Activated CD4-positive, alpha-beta T cell treated with anti-CD3 and anti-CD28 coated beads for 36 hours (primary cell): ENCODE measurements at regions of chr2 and their contacts with region 1.

Region 1: DNA sequence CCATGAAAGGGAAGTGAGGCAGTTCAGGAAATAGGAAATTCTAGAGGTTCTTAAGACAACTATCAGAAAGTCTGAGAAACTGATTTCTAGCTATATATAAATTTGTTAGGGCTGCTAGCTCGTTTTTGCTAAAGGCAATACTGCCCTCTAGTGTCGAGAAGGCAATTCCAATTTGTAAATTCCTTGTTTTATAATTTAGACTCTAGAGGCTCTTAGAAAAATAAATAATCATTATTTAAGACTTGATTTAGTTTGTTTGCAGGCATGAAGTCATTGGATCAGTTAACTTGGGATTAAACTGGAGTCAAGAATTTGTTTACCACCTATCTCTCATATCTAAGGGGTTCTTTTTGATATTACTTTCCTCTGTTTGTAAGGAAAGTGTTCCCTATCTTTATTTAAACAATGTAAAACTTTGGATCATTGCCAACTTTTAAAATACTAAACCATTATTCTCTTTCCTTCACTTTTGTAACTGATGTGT is 66.2 kb downstream of the ACVR2A start:
- DNase-seq: peak; percentile 29
- ATAC-seq: no peak
- H3K4me3 Mint-ChIP-seq: no peak overlapping the region
- H3K27ac Mint-ChIP-seq: no peak overlapping the region
- H3K4me1 Mint-ChIP-seq: no peaks in the 10 kb centered on the region
- H3K27me3 Mint-ChIP-seq: no peaks in the 10 kb centered on the region

Region 2: GRCh38 chr2:146734042-146734820 is 1176.8 kb before region 1 on chr2:
- CTCF ChIA-PET with region 1: interaction called, 4 read pairs
- POLR2A ChIA-PET with region 1: no interaction called
- intact Hi-C with region 1: loop called (anchors 5 to 10 kb)
- DNase-seq: no peak
- ATAC-seq: no peak
- H3K4me3 Mint-ChIP-seq: no peak overlapping the region
- H3K27ac Mint-ChIP-seq: no peak overlapping the region
- H3K4me1 Mint-ChIP-seq: no peaks in the 10 kb centered on the region
- H3K27me3 Mint-ChIP-seq: peaks cover 1% of the 10 kb centered on the region

Region 3: GRCh38 chr2:147045113-147045512 is 865.9 kb before region 1 on chr2:
- CTCF ChIA-PET with region 1: interaction called, 41 read pairs
- POLR2A ChIA-PET with region 1: no interaction called
- intact Hi-C with region 1: loop called (anchors 1 kb)
- DNase-seq: peak; percentile 68
- ATAC-seq: peak; percentile 65
- H3K4me3 Mint-ChIP-seq: no peak overlapping the region
- H3K27ac Mint-ChIP-seq: no peak overlapping the region
- H3K4me1 Mint-ChIP-seq: peaks cover 6% of the 10 kb centered on the region
- H3K27me3 Mint-ChIP-seq: no peaks in the 10 kb centered on the region

Region 4: GRCh38 chr2:147082850-147083522 is 828.0 kb before region 1 on chr2:
- CTCF ChIA-PET with region 1: interaction called, 60 read pairs
- POLR2A ChIA-PET with region 1: no interaction called
- intact Hi-C with region 1: loop called (anchors 1 kb)
- DNase-seq: peak; percentile 59
- ATAC-seq: peak; percentile 75
- H3K4me3 Mint-ChIP-seq: no peak overlapping the region
- H3K27ac Mint-ChIP-seq: no peak overlapping the region
- H3K4me1 Mint-ChIP-seq: peaks cover 2% of the 10 kb centered on the region
- H3K27me3 Mint-ChIP-seq: peaks cover 1% of the 10 kb centered on the region

Region 5: DNA sequence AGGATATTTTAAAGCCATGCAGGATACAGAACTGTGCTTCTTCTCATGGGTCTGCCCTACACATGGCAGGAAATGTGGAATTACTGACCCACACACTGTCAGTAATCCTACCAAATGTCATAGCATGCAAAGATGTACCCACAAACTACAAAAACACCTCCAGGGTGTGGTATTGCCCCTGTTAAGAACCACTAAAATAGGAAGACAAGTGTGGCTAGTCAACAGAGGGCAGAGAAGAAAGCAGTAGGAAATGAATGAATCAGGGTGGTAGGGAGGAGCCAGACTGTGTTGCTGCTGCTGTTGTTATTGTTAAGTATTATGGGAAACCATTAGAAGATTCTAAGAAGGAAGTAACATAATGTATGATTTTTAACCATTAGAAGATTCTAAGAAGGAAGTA is 622.9 kb before region 1 on chr2:
- CTCF ChIA-PET with region 1: no interaction called
- POLR2A ChIA-PET with region 1: no interaction called
- intact Hi-C with region 1: loop called (anchors 2 to 5 kb)
- DNase-seq: peak; percentile 20
- ATAC-seq: peak; percentile 96
- H3K4me3 Mint-ChIP-seq: no peak overlapping the region
- H3K27ac Mint-ChIP-seq: peak overlapping the region; percentile 55
- H3K4me1 Mint-ChIP-seq: peaks cover 37% of the 10 kb centered on the region
- H3K27me3 Mint-ChIP-seq: no peaks in the 10 kb centered on the region

Region 6: GRCh38 chr2:147331790-147332419 is 579.1 kb before region 1 on chr2:
- CTCF ChIA-PET with region 1: no interaction called
- POLR2A ChIA-PET with region 1: no interaction called
- intact Hi-C with region 1: loop called in 1 of 2 experiments (anchors 5 kb)
- DNase-seq: peak; percentile 67
- ATAC-seq: peak; percentile 61
- H3K4me3 Mint-ChIP-seq: no peak overlapping the region
- H3K27ac Mint-ChIP-seq: no peak overlapping the region
- H3K4me1 Mint-ChIP-seq: peaks cover 12% of the 10 kb centered on the region
- H3K27me3 Mint-ChIP-seq: no peaks in the 10 kb centered on the region

Region 7: GRCh38 chr2:147843864-147844696 is 67.0 kb before region 1 on chr2:
- CTCF ChIA-PET with region 1: interaction called, 5 read pairs
- POLR2A ChIA-PET with region 1: no interaction called
- intact Hi-C with region 1: loop called in 1 of 2 experiments (anchors 2 kb)
- DNase-seq: peak; percentile 93
- ATAC-seq: peak; percentile 82
- H3K4me3 Mint-ChIP-seq: peak overlapping the region; percentile 82
- H3K27ac Mint-ChIP-seq: peak overlapping the region; percentile 77
- H3K4me1 Mint-ChIP-seq: peaks cover 34% of the 10 kb centered on the region
- H3K27me3 Mint-ChIP-seq: peaks cover 14% of the 10 kb centered on the region